Activated CD4-positive, alpha-beta memory T cell treated with anti-CD3 and anti-CD28 coated beads for 36 hours (primary cell): ENCODE measurements at regions of chr6 and their contacts with region 1.

Region 1: GRCh38 chr6:2848851-2849250 is 7.2 kb upstream of the SERPINB1 start:
- DNase-seq: peak; percentile 85
- H3K4me3 Mint-ChIP-seq: peak overlapping the region; percentile 59
- H3K27ac Mint-ChIP-seq: peak overlapping the region; percentile 81
- H3K4me1 Mint-ChIP-seq: peaks cover 53% of the 10 kb centered on the region
- H3K27me3 Mint-ChIP-seq: no peaks in the 10 kb centered on the region

Region 2: DNA sequence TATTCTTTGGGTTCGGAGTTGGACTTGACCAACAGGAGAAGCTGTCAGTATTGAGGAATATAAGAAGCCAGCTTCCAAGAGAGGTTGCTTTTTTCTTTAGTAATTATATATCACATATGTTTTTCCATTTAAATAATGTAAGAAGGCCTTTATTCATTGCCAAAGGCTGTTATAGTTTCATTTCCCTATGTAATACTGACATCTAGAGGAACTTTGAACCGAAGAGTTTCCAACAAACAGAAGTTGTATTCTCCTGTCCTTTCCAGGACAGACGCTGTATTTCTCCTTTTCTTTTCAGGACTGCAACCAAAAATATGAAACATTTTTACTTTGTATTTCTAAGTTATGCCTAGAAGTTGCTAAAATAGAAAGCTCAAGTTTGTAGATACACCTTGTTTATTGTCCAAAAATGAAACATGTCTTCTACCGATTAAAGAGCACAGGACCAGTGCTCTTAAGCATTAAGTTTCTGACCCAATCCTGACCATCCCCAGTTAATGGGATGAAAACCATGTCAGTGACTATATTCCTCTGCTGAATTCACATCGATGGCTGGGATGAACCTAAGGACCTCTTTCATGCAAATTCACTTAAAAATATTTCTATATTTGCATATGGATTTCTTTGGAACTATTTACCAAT is 153.3 kb before region 1 on chr6:
- CTCF ChIA-PET with region 1: no interaction called
- POLR2A ChIA-PET with region 1: no interaction called
- intact Hi-C with region 1: no loop called
- DNase-seq: no peak
- H3K4me3 Mint-ChIP-seq: no peak overlapping the region
- H3K27ac Mint-ChIP-seq: no peak overlapping the region
- H3K4me1 Mint-ChIP-seq: no peaks in the 10 kb centered on the region
- H3K27me3 Mint-ChIP-seq: peaks cover 4% of the 10 kb centered on the region

Region 3: GRCh38 chr6:2862712-2863181 is 13.9 kb after region 1 on chr6:
- CTCF ChIA-PET with region 1: interaction called, 20 read pairs
- POLR2A ChIA-PET with region 1: interaction called, 17 read pairs
- intact Hi-C with region 1: loop called (anchors 1 kb)
- DNase-seq: peak; percentile 84
- H3K4me3 Mint-ChIP-seq: peak overlapping the region; percentile 39
- H3K27ac Mint-ChIP-seq: peak overlapping the region; percentile 96
- H3K4me1 Mint-ChIP-seq: peaks cover 77% of the 10 kb centered on the region
- H3K27me3 Mint-ChIP-seq: no peaks in the 10 kb centered on the region

Region 4: GRCh38 chr6:2876210-2877056 is 27.6 kb after region 1 on chr6:
- CTCF ChIA-PET with region 1: interaction called, 17 read pairs
- POLR2A ChIA-PET with region 1: interaction called, 3 read pairs
- intact Hi-C with region 1: no loop called
- DNase-seq: peak; percentile 44
- H3K4me3 Mint-ChIP-seq: peak overlapping the region; percentile 80
- H3K27ac Mint-ChIP-seq: peak overlapping the region; percentile 90
- H3K4me1 Mint-ChIP-seq: peaks cover 81% of the 10 kb centered on the region
- H3K27me3 Mint-ChIP-seq: no peaks in the 10 kb centered on the region

Region 5: GRCh38 chr6:2900821-2901644 is 52.2 kb after region 1 on chr6:
- CTCF ChIA-PET with region 1: interaction called, 53 read pairs
- POLR2A ChIA-PET with region 1: interaction called, 6 read pairs
- intact Hi-C with region 1: no loop called
- DNase-seq: no peak
- H3K4me3 Mint-ChIP-seq: peak overlapping the region; percentile 99
- H3K27ac Mint-ChIP-seq: peak overlapping the region; percentile 95
- H3K4me1 Mint-ChIP-seq: peaks cover 41% of the 10 kb centered on the region
- H3K27me3 Mint-ChIP-seq: no peaks in the 10 kb centered on the region

Region 6: DNA sequence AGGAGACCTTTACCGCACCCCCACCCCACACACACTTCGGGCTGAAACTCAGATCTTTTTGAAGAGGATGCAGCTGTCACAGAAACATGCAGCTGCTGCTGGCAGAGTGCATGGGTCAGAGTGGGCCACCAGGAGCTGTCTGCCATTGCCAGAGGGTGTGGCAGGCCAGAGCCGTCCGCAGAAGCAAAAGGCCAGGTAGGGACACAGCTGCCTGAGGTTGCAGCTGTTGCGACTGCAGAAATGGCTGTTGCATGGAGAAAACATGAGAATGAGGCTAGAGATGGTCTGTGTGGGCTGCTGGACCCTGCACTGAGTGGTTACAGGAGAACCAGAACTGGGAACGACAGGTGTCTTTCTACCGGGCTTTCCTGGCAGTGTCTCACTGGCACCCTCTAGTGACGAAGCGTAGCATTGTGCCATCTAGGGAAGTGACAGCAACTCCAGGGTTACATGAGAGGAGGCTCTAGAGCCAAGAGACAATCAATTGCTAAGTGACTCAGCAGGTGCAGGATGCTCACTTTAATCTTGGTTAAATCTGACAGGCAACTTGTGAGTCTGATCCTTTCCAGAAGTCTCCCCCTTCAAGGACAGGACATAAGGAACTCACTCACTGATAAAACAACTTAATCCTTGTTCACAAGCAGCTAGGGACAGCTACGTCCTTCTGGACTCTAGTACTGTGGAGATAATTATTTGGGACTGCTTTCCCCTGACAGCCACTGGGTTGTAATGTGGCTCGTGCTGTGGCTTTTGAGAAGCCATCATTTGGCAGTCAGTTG is 83.3 kb after region 1 on chr6:
- CTCF ChIA-PET with region 1: interaction called, 109 read pairs
- POLR2A ChIA-PET with region 1: interaction called, 13 read pairs
- intact Hi-C with region 1: loop called (anchors 1 kb)
- DNase-seq: peak; percentile 93
- H3K4me3 Mint-ChIP-seq: peak overlapping the region; percentile 28
- H3K27ac Mint-ChIP-seq: peak overlapping the region; percentile 77
- H3K4me1 Mint-ChIP-seq: peaks cover 26% of the 10 kb centered on the region
- H3K27me3 Mint-ChIP-seq: no peaks in the 10 kb centered on the region

Region 7: GRCh38 chr6:2952557-2953095 is 103.8 kb after region 1 on chr6:
- CTCF ChIA-PET with region 1: interaction called, 14 read pairs
- POLR2A ChIA-PET with region 1: no interaction called
- intact Hi-C with region 1: no loop called
- DNase-seq: peak; percentile 65
- H3K4me3 Mint-ChIP-seq: no peak overlapping the region
- H3K27ac Mint-ChIP-seq: no peak overlapping the region
- H3K4me1 Mint-ChIP-seq: no peaks in the 10 kb centered on the region
- H3K27me3 Mint-ChIP-seq: no peaks in the 10 kb centered on the region

Region 8: GRCh38 chr6:3162565-3163247 is 313.9 kb after region 1 on chr6:
- CTCF ChIA-PET with region 1: no interaction called
- POLR2A ChIA-PET with region 1: no interaction called
- intact Hi-C with region 1: no loop called
- DNase-seq: peak; percentile 70
- H3K4me3 Mint-ChIP-seq: peak overlapping the region; percentile 77
- H3K27ac Mint-ChIP-seq: no peak overlapping the region
- H3K4me1 Mint-ChIP-seq: peaks cover 30% of the 10 kb centered on the region
- H3K27me3 Mint-ChIP-seq: peaks cover 8% of the 10 kb centered on the region